ENCODE measurements at regions of chr6 and their contacts with region 1.

Region 1: GRCh38 chr6:104995989-104996617 is 39.2 kb downstream of the LIN28B start:
- DNase-seq: no peak
- H3K4me3 ChIP-seq: no peak overlapping the region
- H3K27ac ChIP-seq: peak overlapping the region in 41 of 59 donors; percentile 6 to 95 (median 70)
- H3K27me3 ChIP-seq: no peaks in the 10 kb centered on the region
- CTCF ChIP-seq: peak in 43 of 56 donors; percentile 11 to 70 (median 41)

Region 2: DNA sequence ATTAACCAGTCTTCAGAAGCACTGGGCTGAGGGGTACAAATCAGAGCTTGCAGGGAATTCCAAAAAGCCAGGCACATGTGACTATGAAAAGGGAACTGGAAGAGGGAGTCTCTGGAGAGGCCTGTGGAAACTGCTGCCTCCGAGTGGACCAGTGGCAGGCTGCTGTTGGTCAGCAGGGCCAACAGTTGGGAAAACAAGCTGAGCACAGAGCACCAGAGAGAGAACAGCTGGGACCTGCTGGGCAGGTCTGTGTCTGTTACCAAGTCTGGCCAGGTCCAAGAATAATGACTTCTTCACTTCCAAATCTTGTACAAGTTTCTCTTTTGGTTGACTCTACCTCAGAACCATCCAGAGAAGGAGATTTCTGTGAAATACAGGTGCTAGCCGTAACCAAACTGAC is 42.2 kb after region 1 on chr6:
- intact Hi-C with region 1: loop called in 1 of 2 experiments (anchors 5 kb)
- DNase-seq: no peak
- H3K4me3 ChIP-seq: no peak overlapping the region
- H3K27ac ChIP-seq: no peak overlapping the region
- H3K27me3 ChIP-seq: no peaks in the 10 kb centered on the region
- CTCF ChIP-seq: no peak

Region 3: DNA sequence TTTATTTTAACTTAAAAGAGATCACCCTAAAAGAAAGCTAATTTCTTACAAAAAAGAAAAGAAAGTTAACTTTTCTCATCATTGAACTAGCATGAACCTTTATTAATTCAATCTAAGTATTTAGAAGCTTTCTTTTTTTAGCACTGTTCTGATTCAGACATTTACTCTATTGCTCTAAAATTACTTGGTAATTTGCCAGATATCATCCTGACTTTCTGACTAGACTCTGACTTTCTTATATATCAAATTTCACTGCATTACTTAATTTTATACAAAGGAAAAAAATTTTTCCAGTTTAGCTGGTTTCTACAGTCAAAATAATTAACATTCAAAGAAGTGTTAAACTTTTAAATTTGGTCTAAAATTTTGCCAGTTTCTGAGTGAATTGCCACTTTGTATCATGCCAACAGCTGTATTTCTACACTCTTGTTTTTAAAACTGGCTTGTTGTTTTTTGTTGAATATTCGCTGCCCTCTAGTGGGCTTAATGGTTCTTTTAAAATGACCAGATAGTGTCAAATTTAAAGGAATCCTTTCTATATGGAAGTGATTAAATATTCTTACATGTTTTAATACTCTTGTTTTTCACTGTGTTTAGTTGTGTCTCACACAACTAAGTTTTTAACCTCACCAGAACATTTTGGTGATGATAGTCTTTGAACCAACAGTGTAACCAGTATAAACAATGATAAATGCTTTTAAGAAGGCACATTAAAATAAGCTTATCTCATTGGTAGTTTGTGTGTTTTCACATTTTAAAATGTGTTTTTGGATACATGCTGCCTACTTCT is 81.7 kb after region 1 on chr6:
- intact Hi-C with region 1: loop called in 1 of 2 experiments (anchors 1 kb)
- DNase-seq: no peak
- H3K4me3 ChIP-seq: no peak overlapping the region
- H3K27ac ChIP-seq: peak overlapping the region in 4 of 59 donors; percentile 0 to 40 (median 21)
- H3K27me3 ChIP-seq: no peaks in the 10 kb centered on the region
- CTCF ChIP-seq: peak; percentile 40 to 86 (median 68)

Measured in dorsolateral prefrontal cortex (tissue), 120 donors.